Cardiac septum (tissue), 1 donor: ENCODE measurements at regions of chr14 and their contacts with region 1.

Region 1: GRCh38 chr14:104985675-104986525 is at the start of gene CLBA1:
- DNase-seq: peak; percentile 96
- total RNA-seq, gene CLBA1: 2.7 TPM

Region 2: GRCh38 chr14:105020815-105021655 is 35.1 kb after region 1 on chr14 and contains the start of gene CDCA4:
- intact Hi-C with region 1: loop called (anchors 2 kb)
- DNase-seq: peak; percentile 99
- total RNA-seq, gene CDCA4: 2.3 TPM